Posterior vena cava (tissue), 2 donors: ENCODE measurements at regions of chr1 and their contacts with region 1.

Region 1: GRCh38 chr1:229390130-229390529 is 43.8 kb downstream of the ACTA1 start:
- DNase-seq: no peak

Region 2: GRCh38 chr1:229440851-229441537 is 50.9 kb after region 1 on chr1:
- intact Hi-C with region 1: no loop called
- DNase-seq: no peak

Region 3: GRCh38 chr1:230332575-230333066 is 942.5 kb after region 1 on chr1:
- intact Hi-C with region 1: loop called in 1 of 2 experiments (anchors 5 kb)
- DNase-seq: peak; percentile 77